SK-N-SH (cell line): ENCODE measurements at regions of chr4 and their contacts with region 1.

Region 1: DNA sequence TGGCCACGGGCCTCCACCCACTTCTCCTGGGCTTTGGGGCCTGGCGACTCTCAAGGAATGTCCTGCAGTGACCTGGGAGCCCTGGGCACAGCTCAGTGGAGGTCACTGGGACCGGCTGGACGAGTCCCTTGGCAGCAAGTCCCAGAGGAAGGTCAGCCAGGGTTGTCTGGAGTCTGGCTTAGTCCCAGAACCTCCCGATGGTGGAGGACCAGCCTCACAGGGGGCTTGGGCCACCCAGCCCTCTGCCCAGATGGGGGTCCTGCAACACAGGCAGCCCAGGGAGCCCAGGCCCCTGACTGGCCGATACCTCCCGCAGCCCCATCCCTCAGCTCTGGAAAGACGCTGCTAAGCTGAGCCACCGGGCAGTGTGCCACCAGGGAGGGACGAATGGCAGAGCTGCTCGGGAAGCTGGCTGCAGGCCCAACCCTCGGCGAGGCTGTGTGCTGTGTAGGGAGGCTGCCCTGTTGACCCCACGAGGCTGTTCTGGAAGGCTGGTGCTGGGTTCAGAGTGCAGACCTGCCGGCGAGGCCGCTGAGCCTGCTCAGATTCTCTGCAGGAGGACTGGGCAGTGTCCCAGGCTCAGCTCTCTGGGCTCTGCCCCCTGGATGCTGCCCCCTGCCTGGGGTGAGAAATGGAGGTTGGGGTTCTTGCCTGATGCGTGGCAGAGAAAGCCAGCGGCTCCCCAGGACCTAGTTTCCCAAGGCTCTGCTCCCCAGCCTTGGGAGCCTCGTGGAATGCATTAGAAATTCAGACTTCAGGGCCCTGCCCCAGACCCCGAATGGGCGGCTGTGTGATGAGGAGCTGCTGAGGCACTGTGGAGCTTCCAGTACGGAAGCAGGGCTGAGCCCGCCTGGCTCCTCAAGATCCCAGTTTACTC is 61.7 kb downstream of the ADRA2C start:
- DNase-seq: peak; percentile 93
- H3K4me3 ChIP-seq: no peak overlapping the region
- H3K27ac ChIP-seq: peak overlapping the region in 1 of 2 experiments; percentile 83; a peak in 2 of 4 replicates
- H3K4me1 ChIP-seq: peaks cover 0 to 37% of the 10 kb centered on the region in 2 experiments; a peak in 2 of 4 replicates
- H3K27me3 ChIP-seq: no peaks in the 10 kb centered on the region
- CTCF ChIP-seq: no peak
- EP300 ChIP-seq: no peak
- RAD21 ChIP-seq: no peak

Region 2: DNA sequence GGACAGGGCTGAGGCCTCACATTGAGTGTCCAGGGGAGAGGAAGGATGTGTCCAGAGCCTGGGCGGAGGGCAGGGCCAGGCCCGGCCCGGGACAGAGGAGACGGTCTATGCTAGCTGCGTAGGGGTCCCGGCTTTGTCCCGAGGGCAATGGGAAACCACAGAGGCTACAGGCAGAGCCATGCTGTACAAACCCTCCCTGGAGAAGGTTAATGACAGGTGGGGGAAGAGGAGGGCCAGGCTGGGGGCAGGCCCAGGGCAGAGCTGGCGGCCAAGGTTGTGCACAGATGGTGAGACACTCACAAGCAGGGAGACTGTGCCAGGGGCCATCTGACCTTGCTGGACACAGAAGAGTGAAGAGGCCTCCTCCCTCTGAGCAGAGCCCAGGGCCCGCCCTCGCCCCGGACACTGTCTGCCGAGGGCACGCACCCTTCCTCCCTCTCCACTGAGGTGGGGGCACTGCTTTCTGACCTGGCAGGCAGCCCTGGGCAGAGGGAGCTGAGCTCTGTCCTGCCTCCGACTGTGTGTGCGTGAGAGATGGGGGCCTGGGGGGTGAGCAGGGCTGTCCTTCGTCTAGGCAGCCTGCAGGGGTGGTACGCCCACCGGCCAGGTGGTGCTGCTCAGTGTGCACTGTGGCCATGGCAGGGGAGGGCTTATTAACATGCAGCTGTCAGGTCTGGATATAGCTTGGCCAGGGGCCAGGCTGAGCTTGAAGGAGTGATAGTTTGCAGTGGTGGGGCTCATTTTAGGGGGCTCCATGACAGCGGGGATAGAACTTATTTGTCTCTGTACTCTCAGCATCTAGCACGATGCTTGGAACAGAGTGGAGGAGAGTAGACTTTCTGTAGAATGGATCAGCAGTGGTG is 219.9 kb before region 1 on chr4:
- CTCF ChIA-PET with region 1: no interaction called
- POLR2A ChIA-PET with region 1: no interaction called
- DNase-seq: peak; percentile 67
- H3K4me3 ChIP-seq: no peak overlapping the region
- H3K27ac ChIP-seq: peak overlapping the region in 1 of 2 experiments; percentile 64; a peak in 2 of 4 replicates
- H3K4me1 ChIP-seq: peaks cover 0 to 28% of the 10 kb centered on the region in 2 experiments; a peak in 1 of 4 replicates
- H3K27me3 ChIP-seq: no peaks in the 10 kb centered on the region
- CTCF ChIP-seq: no peak
- EP300 ChIP-seq: no peak
- RAD21 ChIP-seq: 0 out of 2 replicates have a peak, but pooled peaks have one; percentile 4

Region 3: DNA sequence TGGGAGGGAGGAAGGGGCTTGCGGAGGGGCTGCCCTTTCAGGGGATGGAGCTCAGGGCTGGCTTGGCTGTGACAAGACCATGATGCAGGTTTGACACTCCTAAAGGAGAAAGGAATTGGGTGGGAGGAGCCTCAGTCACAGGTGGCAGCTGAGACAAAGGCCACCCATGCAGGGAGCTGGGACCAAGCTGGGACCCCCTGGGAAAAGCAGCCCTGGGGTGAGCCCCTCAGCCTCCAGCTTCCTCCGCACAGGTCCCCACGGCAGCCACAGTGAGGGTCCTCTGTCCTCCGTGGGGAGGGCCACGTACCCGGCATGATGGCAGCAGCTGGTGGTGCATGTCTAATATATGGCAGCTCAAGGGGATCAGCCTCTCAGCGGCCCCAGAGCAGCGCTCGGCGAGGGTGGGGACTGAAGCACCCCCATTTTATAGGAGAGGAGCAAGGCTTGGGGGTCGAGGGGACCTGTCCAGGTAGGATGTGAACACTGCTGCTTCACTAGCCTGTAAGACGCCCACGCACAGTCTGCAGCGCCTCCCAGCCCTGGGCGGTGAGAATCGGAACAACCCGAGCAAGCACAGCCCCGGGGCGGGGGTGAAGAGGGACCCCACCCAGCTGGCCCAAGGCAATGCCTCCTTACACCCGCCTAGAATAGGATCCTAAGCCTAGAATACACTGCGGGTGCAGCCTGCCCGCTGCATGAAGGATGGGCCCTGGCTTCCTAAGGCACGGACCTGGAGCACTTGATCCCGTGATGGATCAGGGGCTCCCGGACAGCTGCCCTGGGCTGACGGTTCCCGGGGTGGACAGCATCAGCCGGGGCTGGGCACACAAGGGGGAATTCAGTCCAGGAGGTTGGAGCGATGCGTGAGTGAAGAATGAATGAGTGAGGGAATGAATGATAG is 44.2 kb before region 1 on chr4:
- CTCF ChIA-PET with region 1: no interaction called
- POLR2A ChIA-PET with region 1: interaction called, 10 read pairs
- DNase-seq: no peak
- H3K4me3 ChIP-seq: no peak overlapping the region
- H3K27ac ChIP-seq: no peak overlapping the region; a peak in 1 of 4 replicates
- H3K4me1 ChIP-seq: peaks cover 0 to 62% of the 10 kb centered on the region in 2 experiments; a peak in 2 of 4 replicates
- H3K27me3 ChIP-seq: no peaks in the 10 kb centered on the region
- CTCF ChIP-seq: no peak
- EP300 ChIP-seq: no peak
- RAD21 ChIP-seq: no peak

Region 4: DNA sequence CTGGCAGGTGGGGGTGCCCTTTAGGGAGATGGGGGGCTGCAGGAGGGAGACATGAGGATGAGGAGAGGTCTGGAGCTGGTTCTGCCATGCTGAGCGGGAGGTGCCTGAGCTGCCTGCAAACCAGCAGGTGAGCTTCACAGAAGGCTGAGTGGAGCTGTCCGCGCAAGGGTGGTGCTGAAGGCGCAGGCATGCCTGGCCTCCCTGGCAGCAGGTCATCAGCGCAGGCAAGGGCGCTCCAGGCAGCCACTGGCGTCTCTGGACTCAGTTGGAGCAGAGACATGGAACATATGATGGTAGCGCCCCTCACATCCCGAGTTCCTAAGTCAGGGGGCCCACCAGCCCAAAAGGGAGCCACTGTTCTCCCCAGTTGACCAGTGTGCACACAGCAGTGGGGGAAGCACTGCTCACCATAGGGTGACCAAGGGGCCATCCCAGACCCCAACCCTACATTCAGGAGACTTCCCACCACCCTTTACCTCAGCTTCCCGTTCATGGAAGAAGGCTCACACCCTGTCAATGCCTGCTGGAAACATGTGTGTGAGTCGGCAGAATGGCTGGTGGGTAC is 35.8 kb before region 1 on chr4:
- CTCF ChIA-PET with region 1: interaction called, 10 read pairs
- POLR2A ChIA-PET with region 1: no interaction called
- DNase-seq: no peak
- H3K4me3 ChIP-seq: no peak overlapping the region
- H3K27ac ChIP-seq: no peak overlapping the region
- H3K4me1 ChIP-seq: peaks cover 0 to 33% of the 10 kb centered on the region in 2 experiments; a peak in 1 of 4 replicates
- H3K27me3 ChIP-seq: no peaks in the 10 kb centered on the region
- CTCF ChIP-seq: no peak
- EP300 ChIP-seq: no peak
- RAD21 ChIP-seq: no peak